Right cardiac atrium (tissue), 5 donors: ENCODE measurements at regions of chr1 and their contacts with region 1.

Region 1: DNA sequence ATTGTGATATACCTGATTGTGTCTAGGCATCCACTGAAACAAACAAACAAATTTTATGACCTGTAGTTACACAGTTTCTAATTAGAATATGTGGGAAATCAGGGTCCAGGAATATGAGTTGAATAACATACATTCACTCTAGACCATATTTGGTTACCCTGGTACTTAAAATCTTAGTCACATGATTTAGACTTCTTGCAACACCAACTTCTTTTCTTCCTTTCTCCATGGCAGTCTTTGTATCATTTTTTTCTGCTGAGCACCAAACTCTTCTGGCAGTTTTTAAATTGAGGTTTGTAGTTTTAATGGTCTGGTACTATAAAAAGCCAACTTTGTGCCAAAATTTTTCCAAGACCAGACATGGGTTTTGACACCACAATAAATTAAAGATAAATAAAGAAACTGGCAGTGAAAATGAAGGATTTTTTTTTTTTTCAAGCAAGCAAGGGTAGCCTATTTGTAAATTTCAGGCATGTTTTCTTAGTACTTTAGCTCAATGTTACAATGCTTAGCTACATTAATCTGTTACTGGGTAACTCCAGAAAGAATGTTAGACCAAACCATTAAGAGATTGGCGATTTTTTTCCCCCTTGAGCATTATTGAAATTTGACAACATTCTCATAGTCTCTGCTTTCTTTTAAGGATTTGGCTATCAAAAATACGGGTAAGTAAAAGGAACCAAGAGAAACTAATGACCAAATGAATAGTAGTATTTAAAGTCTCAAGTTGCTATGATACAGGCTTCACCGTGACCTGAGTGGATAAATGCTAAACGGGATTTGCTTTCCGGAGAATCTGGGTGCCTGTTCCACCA is 108.5 kb downstream of the NFIA start:
- DNase-seq: no peak
- ATAC-seq: no peak
- H3K4me3 ChIP-seq: no peak overlapping the region
- H3K27ac ChIP-seq: peak overlapping the region; percentile 47
- H3K4me1 ChIP-seq: peaks cover 8% of the 10 kb centered on the region
- H3K27me3 ChIP-seq: no peaks in the 10 kb centered on the region

Region 2: DNA sequence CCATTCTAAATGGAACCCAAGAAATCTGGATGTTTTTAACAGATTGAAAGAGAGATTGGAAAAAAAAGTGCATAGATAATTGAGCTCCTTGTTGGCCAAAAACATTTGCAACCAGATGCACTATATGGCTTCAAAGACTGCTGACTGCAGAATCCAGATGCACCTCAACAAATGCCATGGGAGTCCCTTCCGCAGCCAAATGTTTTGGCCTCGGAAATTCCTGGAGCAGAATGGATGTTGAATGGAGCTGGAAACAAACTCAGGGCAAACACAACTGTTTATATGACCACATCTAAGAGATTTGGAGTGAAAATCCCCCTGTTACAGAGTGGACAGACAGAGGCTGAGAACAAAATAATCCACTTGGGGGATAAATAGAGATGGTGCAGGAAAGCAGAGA is 393.5 kb before region 1 on chr1:
- intact Hi-C with region 1: no loop called
- DNase-seq: no peak
- ATAC-seq: no peak
- H3K4me3 ChIP-seq: no peak overlapping the region
- H3K27ac ChIP-seq: no peak overlapping the region
- H3K4me1 ChIP-seq: no peaks in the 10 kb centered on the region
- H3K27me3 ChIP-seq: no peaks in the 10 kb centered on the region

Region 3: GRCh38 chr1:61244114-61244513 is 53.3 kb after region 1 on chr1:
- intact Hi-C with region 1: loop called in 2 of 4 experiments (anchors 10 kb)
- DNase-seq: no peak
- ATAC-seq: peak in 1 of 2 donors; percentile 45
- H3K4me3 ChIP-seq: no peak overlapping the region
- H3K27ac ChIP-seq: peak overlapping the region; percentile 11
- H3K4me1 ChIP-seq: peaks cover 8% of the 10 kb centered on the region
- H3K27me3 ChIP-seq: no peaks in the 10 kb centered on the region

Region 4: DNA sequence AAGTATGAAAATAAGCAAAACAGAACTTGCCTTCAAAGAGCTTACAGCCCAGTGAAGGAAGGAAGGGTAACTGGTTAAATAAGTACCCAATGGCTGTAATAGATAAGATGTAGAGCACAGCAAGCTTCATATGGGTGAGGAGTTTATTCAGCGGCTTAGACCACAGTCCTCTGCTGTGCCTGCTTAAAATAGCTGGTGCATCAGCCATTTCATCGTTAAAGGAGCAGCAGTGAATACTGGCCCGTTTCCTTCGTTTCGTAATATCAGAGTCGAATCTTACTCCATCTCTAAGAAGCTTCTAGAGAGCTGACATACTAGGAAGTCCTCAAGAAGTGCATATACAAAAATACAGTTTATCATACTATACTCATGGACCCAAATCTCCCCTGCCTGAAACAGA is 178.1 kb after region 1 on chr1:
- intact Hi-C with region 1: no loop called
- DNase-seq: no peak
- ATAC-seq: peak; percentile 64 to 76
- H3K4me3 ChIP-seq: no peak overlapping the region
- H3K27ac ChIP-seq: peak overlapping the region; percentile 19
- H3K4me1 ChIP-seq: no peaks in the 10 kb centered on the region
- H3K27me3 ChIP-seq: no peaks in the 10 kb centered on the region